ENCODE measurements at regions of chr1 and their contacts with region 1.

Region 1: DNA sequence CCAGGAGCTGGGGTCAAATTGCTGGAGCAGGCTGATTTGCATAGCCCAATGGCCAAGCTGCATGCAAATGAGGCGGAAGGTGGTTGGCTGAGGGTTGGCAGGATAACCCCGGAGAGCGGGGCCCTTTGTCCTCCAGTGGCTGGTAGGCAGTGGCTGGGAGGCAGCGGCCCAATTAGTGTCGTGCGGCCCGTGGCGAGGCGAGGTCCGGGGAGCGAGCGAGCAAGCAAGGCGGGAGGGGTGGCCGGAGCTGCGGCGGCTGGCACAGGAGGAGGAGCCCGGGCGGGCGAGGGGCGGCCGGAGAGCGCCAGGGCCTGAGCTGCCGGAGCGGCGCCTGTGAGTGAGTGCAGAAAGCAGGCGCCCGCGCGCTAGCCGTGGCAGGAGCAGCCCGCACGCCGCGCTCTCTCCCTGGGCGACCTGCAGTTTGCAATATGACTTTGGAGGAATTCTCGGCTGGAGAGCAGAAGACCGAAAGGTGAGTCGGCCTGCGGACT is at the start of gene GADD45A:
- DNase-seq: peak; percentile 98
- H3K4me3 Mint-ChIP-seq: peak within 1 kb of the TSS; percentile 90
- H3K27ac Mint-ChIP-seq: peak within 1 kb of the TSS; percentile 92
- H3K4me1 Mint-ChIP-seq: peaks cover 46% of the 10 kb centered on the region
- H3K27me3 Mint-ChIP-seq: no peaks in the 10 kb centered on the region
- total RNA-seq, gene GADD45A: 47.0 to 48.3 TPM

Region 2: DNA sequence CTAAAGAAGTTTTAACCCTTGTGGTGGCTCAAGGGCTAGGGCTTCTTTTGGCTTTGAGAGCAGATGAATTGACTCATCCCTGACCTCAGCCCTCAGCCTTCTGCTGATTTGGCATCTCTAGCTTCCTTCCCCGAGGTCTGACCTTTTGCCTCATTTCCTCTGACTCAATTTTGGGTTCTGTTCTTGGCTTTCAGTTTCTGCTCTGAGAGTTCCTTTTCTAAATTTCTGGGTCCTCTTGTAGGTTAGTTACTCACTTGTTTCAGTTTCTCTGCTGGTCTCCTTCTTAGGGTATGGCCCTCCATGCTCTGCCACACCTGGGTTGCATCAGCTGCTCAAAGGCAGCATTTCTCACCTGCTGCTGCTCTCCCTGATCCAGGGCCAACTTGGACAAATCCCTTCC is 1873.0 kb before region 1 on chr1:
- CTCF ChIA-PET with region 1: no interaction called
- intact Hi-C with region 1: loop called (anchors 10 kb)
- DNase-seq: peak; percentile 78
- H3K4me3 Mint-ChIP-seq: no peak overlapping the region
- H3K27ac Mint-ChIP-seq: peak overlapping the region; percentile 36
- H3K4me1 Mint-ChIP-seq: peaks cover 12% of the 10 kb centered on the region
- H3K27me3 Mint-ChIP-seq: peaks cover 31% of the 10 kb centered on the region

Region 3: DNA sequence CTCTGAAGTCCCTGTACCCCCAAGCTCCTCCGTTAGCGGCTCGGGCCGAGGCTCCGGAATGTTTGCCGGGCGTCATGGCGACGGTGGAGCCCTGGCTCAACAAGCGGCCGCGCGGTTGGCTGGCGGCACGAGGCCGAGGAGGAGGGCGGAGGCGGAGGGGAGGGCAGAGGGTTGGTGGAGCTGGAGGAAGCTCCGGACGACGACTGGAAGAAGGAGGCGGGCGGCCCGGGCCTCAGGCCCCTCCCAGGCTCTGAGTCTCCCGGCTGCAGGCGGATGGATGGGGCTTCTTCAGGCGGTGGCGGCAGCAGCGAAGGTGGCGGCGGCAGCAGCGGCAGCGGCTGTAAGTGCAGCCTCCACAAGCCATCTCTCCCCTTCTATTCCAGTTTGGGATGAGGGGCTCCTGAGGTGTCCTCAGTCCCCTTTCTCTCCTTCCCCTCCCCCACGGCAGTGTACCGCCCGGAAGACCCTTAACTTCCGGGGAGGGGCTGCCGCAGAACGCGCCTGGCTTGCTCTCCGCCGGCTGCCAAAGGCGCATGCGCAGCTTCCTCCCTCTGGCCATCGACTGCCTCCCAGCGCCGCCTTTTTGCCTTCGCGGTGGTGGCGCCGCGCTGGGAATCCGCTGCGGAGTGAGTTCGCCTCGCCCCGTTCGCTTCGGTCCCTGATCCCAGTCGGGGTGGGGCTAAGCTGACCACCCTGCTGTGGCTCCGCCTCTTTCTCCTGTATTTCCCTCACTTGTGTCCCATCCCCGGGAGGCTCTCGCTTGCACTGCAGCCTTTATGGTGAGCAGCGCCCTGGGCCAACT is 760.2 kb before region 1 on chr1 and contains the starts of genes DNAI4 and MIER1:
- CTCF ChIA-PET with region 1: no interaction called
- intact Hi-C with region 1: loop called (anchors 1 kb)
- DNase-seq: peak; percentile 98
- H3K4me3 Mint-ChIP-seq: peak within 1 kb of the TSS; percentile 92
- H3K27ac Mint-ChIP-seq: peak within 1 kb of the TSS; percentile 95
- H3K4me1 Mint-ChIP-seq: peaks cover 50% of the 10 kb centered on the region
- H3K27me3 Mint-ChIP-seq: no peaks in the 10 kb centered on the region
- total RNA-seq, gene DNAI4: 0.83 to 1.5 TPM
- total RNA-seq, gene MIER1: 56.5 to 58.3 TPM

Region 4: DNA sequence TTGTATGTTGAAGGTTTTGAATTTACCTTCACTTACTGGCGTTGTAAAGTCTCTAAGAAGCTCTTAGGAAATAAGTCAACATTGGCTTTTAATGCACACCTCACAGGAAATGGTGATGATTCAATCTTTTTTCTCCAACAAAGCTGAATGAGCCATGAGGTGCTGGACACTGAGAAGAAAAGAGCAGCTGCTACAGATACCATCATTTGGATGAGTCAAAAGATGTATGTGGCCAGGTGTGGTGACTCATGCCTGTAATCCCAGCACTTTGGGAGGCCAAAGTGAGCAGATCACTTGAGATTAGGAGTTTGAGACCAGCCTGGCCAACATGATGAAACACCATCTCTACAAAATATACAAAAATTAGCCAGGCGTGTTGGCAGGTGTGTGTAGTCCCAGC is 522.2 kb before region 1 on chr1:
- CTCF ChIA-PET with region 1: no interaction called
- intact Hi-C with region 1: loop called (anchors 5 kb)
- DNase-seq: peak; percentile 76
- H3K4me3 Mint-ChIP-seq: peak overlapping the region; percentile 42
- H3K27ac Mint-ChIP-seq: peak overlapping the region; percentile 83
- H3K4me1 Mint-ChIP-seq: peaks cover 63% of the 10 kb centered on the region
- H3K27me3 Mint-ChIP-seq: no peaks in the 10 kb centered on the region

Region 5: DNA sequence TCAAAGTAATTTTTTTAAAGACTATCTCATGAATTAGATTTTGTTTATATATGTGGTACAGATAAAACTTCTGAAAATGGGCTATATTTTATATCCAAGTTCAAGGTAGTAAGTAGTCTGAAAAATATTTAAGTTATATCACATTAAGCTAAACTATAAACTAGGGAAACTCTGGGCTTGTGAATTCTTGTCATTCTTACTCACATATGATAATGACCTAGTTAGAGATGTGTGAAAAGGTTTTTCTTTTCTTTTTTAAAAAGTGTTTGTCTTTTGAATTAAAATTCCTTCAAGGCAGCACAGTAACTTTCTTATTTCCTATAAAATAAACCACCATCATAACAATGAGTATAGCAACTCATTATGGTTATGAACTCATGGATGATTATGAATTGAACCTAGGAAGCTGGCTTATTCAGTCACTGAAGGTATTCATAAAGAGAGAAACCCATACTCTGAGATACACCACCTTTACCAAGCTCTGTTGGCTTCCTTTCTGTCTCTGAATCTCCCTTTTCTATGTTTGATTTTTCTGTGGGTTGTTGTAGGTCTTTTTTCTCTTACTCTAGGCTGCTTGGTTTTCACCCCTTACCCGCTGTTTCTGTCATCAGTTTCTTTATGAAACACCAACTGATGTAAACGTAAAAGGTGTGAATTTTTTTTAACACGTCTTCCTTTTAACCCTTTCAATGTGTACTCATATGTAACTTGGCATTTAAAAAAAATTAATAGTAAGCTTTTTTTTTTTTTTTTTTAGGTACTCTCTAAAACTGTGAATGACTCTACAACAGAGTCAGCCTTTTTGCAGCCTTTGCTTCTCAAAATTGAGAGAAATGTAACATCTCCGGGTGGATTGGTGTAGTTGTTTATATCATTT is 352.2 kb before region 1 on chr1:
- CTCF ChIA-PET with region 1: no interaction called
- intact Hi-C with region 1: loop called (anchors 1 kb)
- DNase-seq: peak; percentile 67
- H3K4me3 Mint-ChIP-seq: no peak overlapping the region
- H3K27ac Mint-ChIP-seq: peak overlapping the region; percentile 97
- H3K4me1 Mint-ChIP-seq: peaks cover 79% of the 10 kb centered on the region
- H3K27me3 Mint-ChIP-seq: no peaks in the 10 kb centered on the region

Region 6: GRCh38 chr1:67551375-67551774 is 133.7 kb before region 1 on chr1:
- CTCF ChIA-PET with region 1: no interaction called
- intact Hi-C with region 1: no loop called
- DNase-seq: no peak
- H3K4me3 Mint-ChIP-seq: no peak overlapping the region
- H3K27ac Mint-ChIP-seq: no peak overlapping the region
- H3K4me1 Mint-ChIP-seq: no peaks in the 10 kb centered on the region
- H3K27me3 Mint-ChIP-seq: peaks cover 8% of the 10 kb centered on the region

Region 7: DNA sequence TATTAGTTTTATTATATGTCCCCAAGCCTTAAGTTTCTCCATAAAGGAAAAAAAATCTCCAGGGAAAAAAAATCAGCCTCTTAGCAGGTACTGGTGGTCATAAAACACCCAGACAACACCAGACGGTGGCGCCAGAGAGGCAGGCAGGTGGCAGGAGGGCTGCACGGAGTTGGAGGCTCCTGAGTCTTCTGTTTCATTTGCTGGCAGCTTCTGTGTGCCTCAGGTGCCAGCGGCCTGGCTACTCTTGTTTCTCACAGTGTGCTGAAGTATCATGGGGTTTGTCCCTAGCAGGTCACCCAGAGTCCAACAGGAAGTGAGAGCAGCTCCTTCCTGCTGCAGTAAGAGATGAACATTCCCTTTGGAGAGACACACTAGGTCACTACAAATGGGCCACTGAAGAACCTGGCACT is 123.4 kb before region 1 on chr1:
- CTCF ChIA-PET with region 1: interaction called, 3 read pairs
- intact Hi-C with region 1: loop called (anchors 1 kb)
- DNase-seq: peak; percentile 96
- H3K4me3 Mint-ChIP-seq: no peak overlapping the region
- H3K27ac Mint-ChIP-seq: no peak overlapping the region
- H3K4me1 Mint-ChIP-seq: no peaks in the 10 kb centered on the region
- H3K27me3 Mint-ChIP-seq: no peaks in the 10 kb centered on the region

Region 8: DNA sequence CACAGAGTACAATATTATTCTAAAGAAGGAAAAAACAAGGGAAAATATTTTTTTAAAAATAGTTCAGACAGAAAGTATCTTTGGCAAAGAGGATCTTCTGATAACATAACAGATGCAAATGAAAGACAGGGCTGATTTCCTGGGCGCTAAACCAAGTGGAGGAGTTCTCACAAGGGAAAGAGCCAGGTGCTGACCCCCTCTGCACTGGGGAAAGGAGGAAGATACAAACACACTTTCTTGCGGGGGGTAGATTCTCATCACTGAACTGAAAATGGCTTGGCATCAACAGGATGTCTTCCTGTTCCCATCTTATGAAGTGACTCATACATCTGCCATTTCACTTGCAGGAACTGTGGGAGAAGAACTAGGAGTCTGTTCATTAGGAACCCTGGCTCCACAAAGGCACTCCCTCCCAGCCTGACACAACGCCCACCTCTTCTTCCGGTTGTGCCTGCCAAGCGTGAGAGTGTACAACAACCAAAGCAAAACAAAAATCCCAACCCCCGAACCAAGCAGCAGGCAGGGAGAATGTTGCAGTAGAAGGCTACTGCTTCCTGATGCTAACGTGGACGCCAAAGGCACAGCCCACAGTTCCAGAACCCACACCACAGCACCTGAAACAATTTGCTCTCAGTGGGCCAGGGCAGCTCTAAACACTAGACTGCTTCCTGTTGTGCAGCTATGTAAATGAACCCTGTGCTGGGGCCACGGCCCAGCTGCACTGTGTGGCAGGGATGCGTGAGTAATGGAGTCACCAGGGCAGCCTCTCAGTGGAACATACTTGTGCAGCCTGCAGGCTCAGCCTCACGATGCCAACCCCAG is 50.9 kb after region 1 on chr1:
- CTCF ChIA-PET with region 1: no interaction called
- intact Hi-C with region 1: loop called (anchors 1 kb)
- DNase-seq: peak; percentile 73
- H3K4me3 Mint-ChIP-seq: peak overlapping the region; percentile 53
- H3K27ac Mint-ChIP-seq: peak overlapping the region; percentile 74
- H3K4me1 Mint-ChIP-seq: peaks cover 16% of the 10 kb centered on the region
- H3K27me3 Mint-ChIP-seq: peaks cover 4% of the 10 kb centered on the region